ENCODE measurements at regions of chr1 and their contacts with region 1.

Region 1: GRCh38 chr1:39098546-39099250 is 72.5 kb downstream of the NDUFS5 start:
- DNase-seq: peak in 9 of 10 donors; percentile 64 to 96 (median 77)

Region 2: DNA sequence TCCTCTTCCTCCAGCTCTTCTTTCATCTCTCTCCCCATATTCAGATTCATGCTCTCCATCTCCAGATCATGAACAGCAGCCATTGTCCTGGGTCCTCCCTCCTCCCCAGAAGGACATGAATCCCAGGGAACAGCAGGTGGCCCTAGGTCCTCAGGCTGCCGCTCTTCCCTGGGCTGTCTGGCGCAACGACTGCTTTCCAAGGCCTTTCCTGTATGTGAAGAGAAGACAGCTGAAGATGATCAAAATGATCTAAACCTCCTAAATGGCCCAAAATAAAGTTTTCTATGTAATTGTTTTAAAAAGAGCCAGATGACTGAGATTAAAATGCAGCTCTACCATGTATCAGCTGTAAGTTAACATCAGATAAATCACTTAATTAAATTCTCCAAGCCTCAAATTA is 179.6 kb before region 1 on chr1:
- intact Hi-C with region 1: loop called (anchors 10 kb)
- DNase-seq: peak in 8 of 10 donors; percentile 38 to 95 (median 60)

Region 3: DNA sequence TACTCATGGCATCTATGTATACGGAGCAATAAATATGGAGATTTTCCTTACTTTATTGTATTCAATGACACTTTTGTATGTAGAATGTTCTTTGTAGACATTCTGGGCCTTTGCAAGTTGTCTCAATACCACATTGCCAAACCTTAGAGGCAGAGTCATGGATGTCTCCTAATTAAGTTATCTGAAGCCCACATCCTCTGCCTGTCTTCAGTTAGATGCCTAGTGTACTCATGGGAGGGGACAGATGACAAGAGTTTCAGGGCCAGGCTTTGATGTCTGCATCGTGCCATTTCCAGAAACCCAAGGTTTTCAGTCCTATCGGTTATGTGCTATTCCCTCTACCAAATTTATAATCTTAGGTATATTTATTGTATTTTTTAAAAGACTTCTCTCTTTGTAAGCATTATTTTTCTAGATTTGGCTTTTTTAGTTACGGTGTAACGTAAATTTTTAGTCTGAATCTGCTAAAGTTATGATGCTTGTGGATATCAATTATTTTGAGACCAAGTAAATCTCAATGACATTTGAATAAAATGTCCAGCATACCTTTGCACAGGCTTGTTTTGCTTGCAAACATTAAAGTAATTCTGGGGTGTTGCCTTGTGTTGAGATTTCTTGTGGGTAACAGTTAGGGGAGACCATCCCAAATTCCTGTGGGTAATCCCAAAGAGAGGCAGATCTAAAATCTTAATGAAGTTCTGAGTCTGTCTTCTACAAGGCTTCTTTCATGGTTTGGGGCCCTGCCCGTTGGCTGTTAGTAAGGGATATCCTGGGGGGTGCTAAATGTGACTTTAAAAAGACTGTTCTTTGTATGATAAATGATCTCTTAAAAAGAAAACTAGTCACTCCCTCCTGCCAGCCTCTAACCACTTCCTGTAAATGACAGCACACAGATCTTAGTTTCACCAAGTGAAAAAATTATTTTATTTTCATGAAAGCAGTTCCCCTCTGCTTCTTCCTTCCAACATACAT is 97.8 kb after region 1 on chr1:
- intact Hi-C with region 1: loop called (anchors 1 kb)
- DNase-seq: no peak

Region 4: DNA sequence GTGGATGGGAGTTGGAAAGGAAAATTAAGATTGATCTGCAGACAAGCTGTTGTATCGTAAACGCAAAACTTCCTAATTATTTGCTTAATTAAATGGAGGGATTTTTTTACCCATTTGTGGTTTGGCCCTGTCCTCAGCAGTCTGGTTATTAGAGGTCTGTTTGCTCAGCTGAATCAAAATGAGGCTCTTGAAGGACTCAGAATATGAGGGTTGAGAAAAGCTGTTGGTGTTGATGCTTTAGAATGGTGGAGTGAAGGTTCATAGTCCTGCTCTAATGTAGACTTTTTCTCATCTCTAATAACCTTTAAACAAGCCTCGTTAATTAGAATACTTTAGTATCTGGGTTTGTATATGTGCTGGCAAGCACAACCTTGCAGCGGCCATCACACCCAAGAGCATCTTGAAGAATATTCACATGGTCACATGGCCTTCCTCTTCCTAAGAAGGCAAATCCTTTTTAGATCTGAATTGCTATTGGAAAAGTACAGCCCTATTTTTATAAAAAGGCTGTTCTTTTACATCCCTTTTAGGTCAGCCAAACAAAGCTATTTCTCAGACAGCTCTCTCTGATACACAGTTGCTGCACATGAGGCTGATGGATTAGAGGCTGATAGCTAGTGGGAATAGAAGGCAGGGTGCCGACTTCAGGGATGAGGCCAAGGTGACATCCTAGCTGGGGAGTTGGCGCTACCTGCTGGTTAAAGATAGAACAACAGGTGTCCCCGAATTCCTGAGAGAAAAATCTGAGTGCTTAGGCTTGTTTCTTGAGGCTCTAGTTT is 159.6 kb after region 1 on chr1:
- intact Hi-C with region 1: loop called (anchors 2 kb)
- DNase-seq: peak in 7 of 10 donors; percentile 54 to 93 (median 67)

Region 5: GRCh38 chr1:39408641-39409054 is 309.9 kb after region 1 on chr1:
- intact Hi-C with region 1: loop called (anchors 10 kb)
- DNase-seq: peak; percentile 84 to 99 (median 90)

Region 6: GRCh38 chr1:39538588-39539465 is 440.1 kb after region 1 on chr1:
- intact Hi-C with region 1: loop called (anchors 5 kb)
- DNase-seq: peak; percentile 27 to 96 (median 76)

Measured in posterior cingulate gyrus (tissue), 11 donors.